Activated CD8-positive, alpha-beta T cell treated with anti-CD3 and anti-CD28 coated beads, Interleukin-2, amount 10 ng/mL, durations not matched to agents 7 days and 5 days (primary cell): ENCODE measurements at regions of chr1 and their contacts with region 1.

Region 1: GRCh38 chr1:235866913-235867845 is 473 bp upstream of the LYST start:
- DNase-seq: peak; percentile 97
- ATAC-seq: peak; percentile 70
- H3K4me3 Mint-ChIP-seq: peak overlapping the region; percentile 86
- H3K27ac Mint-ChIP-seq: peak overlapping the region; percentile 96
- H3K4me1 Mint-ChIP-seq: peaks cover 40% of the 10 kb centered on the region
- H3K27me3 Mint-ChIP-seq: no peaks in the 10 kb centered on the region

Region 2: DNA sequence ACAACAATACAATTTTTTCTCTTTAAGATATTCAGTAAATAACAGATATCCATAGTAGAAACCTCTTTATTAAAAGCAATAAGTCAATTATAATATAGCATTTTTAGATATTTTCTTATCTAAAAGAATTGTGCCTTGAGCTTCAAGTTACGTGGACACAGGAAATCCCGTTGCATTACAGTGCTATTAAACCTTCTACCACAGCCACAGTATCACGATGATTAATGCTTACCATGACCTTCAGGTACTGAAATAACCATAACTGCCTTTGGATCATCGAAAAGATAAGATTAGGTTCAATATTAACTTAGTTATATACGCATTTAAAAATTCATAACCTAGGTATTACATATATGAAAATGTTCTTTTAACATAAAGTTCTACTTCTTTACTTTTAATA is 380.9 kb before region 1 on chr1:
- CTCF ChIA-PET with region 1: no interaction called
- POLR2A ChIA-PET with region 1: no interaction called
- DNase-seq: no peak
- ATAC-seq: no peak
- H3K4me3 Mint-ChIP-seq: no peak overlapping the region
- H3K27ac Mint-ChIP-seq: no peak overlapping the region
- H3K4me1 Mint-ChIP-seq: no peaks in the 10 kb centered on the region
- H3K27me3 Mint-ChIP-seq: no peaks in the 10 kb centered on the region

Region 3: DNA sequence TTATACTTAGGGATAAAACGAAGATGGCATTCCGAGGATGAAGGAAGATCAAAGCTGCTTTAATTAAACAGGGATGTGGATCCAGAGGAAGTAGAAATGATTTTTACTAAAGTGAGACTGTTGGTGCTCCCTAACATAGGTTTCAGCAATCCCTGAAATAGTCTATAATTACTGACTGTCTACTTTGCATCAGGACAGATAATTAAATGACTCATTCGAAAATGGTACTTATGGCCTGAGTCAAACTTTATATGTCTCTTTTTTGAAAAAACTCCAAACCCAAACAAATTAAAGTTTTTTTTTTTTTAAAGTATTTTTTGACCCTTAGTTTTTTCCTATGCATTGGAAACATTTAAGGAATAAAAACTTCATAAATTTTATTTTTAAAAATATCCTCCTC is 90.8 kb before region 1 on chr1:
- CTCF ChIA-PET with region 1: no interaction called
- POLR2A ChIA-PET with region 1: no interaction called
- DNase-seq: no peak
- ATAC-seq: no peak
- H3K4me3 Mint-ChIP-seq: no peak overlapping the region
- H3K27ac Mint-ChIP-seq: no peak overlapping the region
- H3K4me1 Mint-ChIP-seq: no peaks in the 10 kb centered on the region
- H3K27me3 Mint-ChIP-seq: no peaks in the 10 kb centered on the region

Region 4: GRCh38 chr1:235809688-235810397 is 57.3 kb before region 1 on chr1:
- CTCF ChIA-PET with region 1: no interaction called
- POLR2A ChIA-PET with region 1: no interaction called
- DNase-seq: no peak
- ATAC-seq: no peak
- H3K4me3 Mint-ChIP-seq: no peak overlapping the region
- H3K27ac Mint-ChIP-seq: no peak overlapping the region
- H3K4me1 Mint-ChIP-seq: no peaks in the 10 kb centered on the region
- H3K27me3 Mint-ChIP-seq: no peaks in the 10 kb centered on the region

Region 5: DNA sequence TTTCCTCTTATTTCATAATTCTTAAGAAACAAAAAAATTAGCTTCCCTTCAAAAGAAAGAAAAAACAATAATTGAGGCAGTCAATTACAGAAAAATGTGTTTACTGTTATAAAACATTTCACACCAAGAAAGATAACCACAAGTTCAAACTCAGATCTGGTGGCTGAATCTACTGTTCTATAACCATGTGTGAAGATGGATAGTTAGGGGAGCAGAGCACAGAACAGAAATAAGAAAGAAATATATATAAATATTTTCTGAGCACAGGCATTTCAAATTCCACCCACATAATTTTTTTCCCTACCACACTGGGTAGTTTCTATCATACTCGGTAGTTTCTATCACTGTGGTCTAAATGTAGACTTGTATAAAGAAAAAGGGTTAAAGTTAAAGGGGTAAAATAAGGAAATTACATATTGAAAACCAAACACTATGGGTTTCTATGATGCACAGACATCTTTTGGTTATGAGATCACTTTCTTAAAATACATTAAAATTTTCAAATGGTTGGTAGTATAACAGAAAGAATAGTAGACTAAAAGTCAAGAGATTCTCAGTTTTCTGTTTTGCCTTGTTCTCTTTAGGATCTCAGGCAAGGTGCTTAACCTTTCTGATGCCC is 11.3 kb before region 1 on chr1:
- CTCF ChIA-PET with region 1: interaction called, 15 read pairs
- POLR2A ChIA-PET with region 1: interaction called, 10 read pairs
- DNase-seq: no peak
- ATAC-seq: peak; percentile 59
- H3K4me3 Mint-ChIP-seq: no peak overlapping the region
- H3K27ac Mint-ChIP-seq: peak overlapping the region; percentile 39
- H3K4me1 Mint-ChIP-seq: peaks cover 47% of the 10 kb centered on the region
- H3K27me3 Mint-ChIP-seq: no peaks in the 10 kb centered on the region

Region 6: DNA sequence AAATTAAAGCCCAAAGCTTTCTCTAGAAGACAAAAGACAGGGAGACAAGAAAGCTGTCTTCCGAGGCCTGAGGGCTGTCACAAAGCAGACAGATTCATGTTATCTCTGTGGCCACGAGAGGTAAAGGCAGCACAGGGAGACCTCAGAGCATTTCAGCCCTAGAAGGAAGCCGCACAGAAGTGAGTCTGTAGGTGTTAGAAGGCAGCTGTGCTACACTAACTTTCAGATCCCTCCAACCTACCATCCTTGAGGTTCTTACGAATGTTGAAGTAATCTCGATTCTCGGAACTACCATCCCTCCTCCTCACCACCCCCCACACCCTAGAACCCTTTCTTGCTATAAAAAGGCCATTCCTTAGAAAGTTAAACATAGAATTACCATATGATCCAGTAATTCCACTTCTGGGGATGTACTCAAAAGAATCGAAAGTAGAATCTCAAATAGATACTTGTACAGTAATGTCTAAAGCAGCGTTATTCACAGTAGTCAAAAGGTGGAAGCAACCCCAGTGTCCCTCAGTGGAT is 21.0 kb after region 1 on chr1:
- CTCF ChIA-PET with region 1: interaction called, 19 read pairs
- POLR2A ChIA-PET with region 1: interaction called, 39 read pairs
- DNase-seq: peak; percentile 79
- ATAC-seq: peak; percentile 97
- H3K4me3 Mint-ChIP-seq: peak overlapping the region; percentile 72
- H3K27ac Mint-ChIP-seq: peak overlapping the region; percentile 97
- H3K4me1 Mint-ChIP-seq: peaks cover 62% of the 10 kb centered on the region
- H3K27me3 Mint-ChIP-seq: no peaks in the 10 kb centered on the region

Region 7: DNA sequence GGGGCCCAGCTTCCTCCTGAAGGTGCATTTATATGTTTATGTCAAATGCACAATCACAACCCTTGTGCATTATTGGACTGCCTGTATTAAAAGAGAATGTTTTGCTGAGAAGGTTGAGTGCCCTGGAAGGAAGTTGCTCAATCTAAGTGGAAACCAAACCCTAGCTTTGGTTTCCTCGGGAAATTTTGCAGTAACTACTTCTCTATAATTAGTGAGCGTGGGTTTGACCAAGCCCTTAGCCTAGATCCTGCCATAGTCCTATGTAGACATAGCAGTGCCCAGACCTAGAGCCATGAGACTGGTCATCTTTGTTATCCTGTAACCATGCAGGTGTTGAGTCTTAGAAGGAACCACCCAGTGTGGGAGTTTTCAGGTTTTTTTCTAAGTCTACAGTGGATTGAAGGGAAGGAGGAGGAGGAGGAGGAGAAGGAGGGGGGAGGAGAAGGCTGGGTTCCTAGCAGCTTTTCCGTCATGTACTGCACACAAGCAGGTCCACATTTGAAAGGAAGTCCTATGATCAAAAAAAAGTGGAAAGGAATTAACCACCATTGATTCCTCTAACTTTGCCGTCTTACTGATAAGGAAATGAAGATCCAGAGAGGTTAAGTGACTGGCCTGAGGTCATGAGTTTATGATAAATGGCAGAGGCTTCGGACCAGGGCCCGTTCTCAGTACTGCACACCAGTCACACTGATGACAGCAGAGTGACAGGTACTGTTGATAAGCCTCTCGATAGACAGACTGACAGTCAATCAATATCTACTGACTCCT is 71.7 kb after region 1 on chr1:
- CTCF ChIA-PET with region 1: interaction called, 10 read pairs
- POLR2A ChIA-PET with region 1: interaction called, 4 read pairs
- DNase-seq: no peak
- ATAC-seq: peak; percentile 31
- H3K4me3 Mint-ChIP-seq: peak overlapping the region; percentile 41
- H3K27ac Mint-ChIP-seq: peak overlapping the region; percentile 79
- H3K4me1 Mint-ChIP-seq: peaks cover 42% of the 10 kb centered on the region
- H3K27me3 Mint-ChIP-seq: peaks cover 3% of the 10 kb centered on the region

Region 8: DNA sequence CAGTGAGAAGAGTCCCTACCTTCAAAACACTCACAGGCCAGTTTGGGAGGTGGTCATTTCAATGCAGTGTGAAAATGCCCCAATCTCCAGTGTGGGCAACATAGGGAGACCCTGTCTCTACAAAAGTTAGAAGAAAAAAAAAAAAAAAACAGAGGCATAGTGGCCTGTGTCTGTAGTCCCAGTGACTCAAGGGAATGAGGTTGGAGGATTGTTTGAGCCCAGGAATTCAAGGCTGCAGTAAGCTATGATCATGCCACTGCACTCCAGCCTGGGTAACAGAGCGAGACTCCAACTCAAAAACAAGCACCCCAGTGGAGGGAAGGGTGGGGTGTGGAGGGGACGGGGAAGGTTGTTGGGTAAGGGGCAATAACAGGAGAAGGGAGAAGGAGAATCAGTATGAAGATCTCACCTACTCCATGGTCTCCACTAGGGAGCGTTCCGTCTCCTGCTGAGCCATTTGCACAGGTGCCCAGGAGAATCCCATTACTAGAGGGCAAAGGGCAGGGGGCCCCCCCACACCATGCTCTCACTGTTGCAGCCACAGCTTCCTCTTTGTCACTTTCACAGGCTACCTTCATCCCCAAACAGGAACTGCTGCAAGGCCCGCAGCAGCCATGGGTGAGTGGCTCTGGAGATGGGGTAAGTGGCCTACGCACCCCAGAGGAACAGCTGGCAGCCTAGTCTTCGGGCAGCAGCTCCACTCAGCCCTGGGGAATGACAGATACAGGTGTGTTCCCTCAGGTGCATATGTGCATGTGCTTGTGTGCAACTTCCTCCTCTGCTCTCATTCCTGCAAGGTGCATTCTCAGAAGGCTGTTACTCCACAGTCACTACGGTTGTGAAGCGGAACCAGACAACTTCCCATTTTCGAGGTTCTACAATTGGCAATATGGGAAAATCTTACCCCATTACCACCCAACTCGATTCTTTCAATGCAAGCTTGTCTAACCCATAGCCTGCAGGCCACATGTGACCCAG is 87.4 kb after region 1 on chr1:
- CTCF ChIA-PET with region 1: interaction called, 12 read pairs
- POLR2A ChIA-PET with region 1: interaction called, 8 read pairs
- DNase-seq: peak; percentile 60
- ATAC-seq: peak; percentile 87
- H3K4me3 Mint-ChIP-seq: peak overlapping the region; percentile 20
- H3K27ac Mint-ChIP-seq: peak overlapping the region; percentile 23
- H3K4me1 Mint-ChIP-seq: peaks cover 34% of the 10 kb centered on the region
- H3K27me3 Mint-ChIP-seq: no peaks in the 10 kb centered on the region